Panc1 (cell line): ENCODE measurements at regions of chr22 and their contacts with region 1.

Region 1: GRCh38 chr22:49713003-49713402 is 114.7 kb downstream of the BRD1 start:
- DNase-seq: no peak
- ATAC-seq: no peak
- H3K4me3 ChIP-seq: no peak overlapping the region
- H3K27ac ChIP-seq: no peak overlapping the region
- H3K4me1 ChIP-seq: no peaks in the 10 kb centered on the region
- H3K27me3 ChIP-seq: no peaks in the 10 kb centered on the region; the same call in 1 of the 2 replicates
- CTCF ChIP-seq: no peak

Region 2: DNA sequence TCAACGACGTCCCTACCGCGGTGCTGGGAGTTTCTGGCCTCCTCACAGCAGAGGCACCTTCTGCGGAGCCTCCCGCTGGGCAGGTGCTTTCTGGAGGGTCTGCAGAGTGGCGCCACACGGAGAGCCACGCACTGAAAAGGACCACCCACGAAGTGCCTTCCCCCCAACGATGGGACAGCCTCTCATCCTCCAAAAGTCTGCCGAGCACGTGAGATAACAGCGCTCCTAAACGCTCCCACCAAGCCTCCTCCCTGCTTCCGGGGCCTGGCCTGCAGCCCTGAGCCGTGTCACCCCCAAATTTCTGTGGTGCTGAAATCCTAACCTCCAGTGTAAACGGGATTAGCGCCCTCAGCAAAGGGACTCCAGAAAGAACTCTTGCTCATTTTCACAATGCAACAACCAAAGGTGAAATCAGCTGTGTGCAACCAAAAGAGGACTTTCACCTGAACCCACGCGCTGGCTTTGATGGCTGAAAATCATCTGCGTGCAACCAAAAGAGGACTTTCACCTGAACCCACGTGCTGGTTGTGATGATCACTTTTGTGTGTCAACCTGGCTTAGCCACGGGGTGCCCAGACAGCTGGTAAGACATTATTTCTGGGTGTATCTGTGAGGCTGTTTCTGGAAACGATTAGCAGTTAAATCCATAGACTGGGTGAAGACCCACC is 809.9 kb before region 1 on chr22:
- CTCF ChIA-PET with region 1: no interaction called
- POLR2A ChIA-PET with region 1: interaction called, 18 read pairs
- in situ Hi-C with region 1: no loop called
- intact Hi-C with region 1: no loop called
- DNase-seq: no peak
- ATAC-seq: no peak
- H3K4me3 ChIP-seq: no peak overlapping the region
- H3K27ac ChIP-seq: no peak overlapping the region
- H3K4me1 ChIP-seq: no peaks in the 10 kb centered on the region
- H3K27me3 ChIP-seq: no peaks in the 10 kb centered on the region; the same call in 1 of the 2 replicates
- CTCF ChIP-seq: no peak

Region 3: DNA sequence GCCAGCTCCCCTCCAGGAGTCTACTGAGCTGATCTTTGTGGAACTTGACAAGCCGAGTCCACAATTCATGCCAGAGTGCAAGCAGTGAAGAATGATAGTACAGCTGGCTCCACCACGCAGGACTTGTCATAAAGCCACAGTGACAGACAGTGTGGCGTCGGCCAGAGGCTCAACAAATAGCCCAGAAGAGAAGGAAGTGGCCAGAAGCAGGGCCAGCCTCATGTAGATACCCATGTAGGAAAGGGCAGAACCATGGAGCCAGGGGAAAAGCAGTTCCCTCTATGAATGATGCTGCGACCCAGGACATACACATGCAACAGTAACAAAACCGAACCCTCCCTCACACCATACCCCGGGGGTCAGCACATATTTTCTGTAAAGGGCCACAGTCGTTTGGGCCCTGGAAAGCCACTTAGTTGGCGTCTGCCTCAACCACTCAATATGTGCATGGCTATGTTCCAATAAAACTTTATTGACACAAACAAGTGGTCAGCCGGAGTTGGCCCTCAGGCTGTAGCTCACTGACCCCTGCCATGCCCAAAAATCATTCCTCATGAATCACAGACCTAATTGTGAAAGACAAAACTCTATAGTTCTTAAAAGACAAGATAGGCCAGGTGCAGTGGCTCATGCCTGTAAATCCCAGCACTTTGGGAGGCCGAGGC is 46.7 kb before region 1 on chr22:
- CTCF ChIA-PET with region 1: no interaction called
- POLR2A ChIA-PET with region 1: interaction called, 16 read pairs
- in situ Hi-C with region 1: no loop called
- intact Hi-C with region 1: no loop called
- DNase-seq: no peak
- ATAC-seq: no peak
- H3K4me3 ChIP-seq: no peak overlapping the region
- H3K27ac ChIP-seq: no peak overlapping the region
- H3K4me1 ChIP-seq: no peaks in the 10 kb centered on the region
- H3K27me3 ChIP-seq: no peaks in the 10 kb centered on the region
- CTCF ChIP-seq: no peak